Naive thymus-derived CD8-positive, alpha-beta T cell (primary cell): ENCODE measurements at regions of chrX and their contacts with region 1.

Region 1: DNA sequence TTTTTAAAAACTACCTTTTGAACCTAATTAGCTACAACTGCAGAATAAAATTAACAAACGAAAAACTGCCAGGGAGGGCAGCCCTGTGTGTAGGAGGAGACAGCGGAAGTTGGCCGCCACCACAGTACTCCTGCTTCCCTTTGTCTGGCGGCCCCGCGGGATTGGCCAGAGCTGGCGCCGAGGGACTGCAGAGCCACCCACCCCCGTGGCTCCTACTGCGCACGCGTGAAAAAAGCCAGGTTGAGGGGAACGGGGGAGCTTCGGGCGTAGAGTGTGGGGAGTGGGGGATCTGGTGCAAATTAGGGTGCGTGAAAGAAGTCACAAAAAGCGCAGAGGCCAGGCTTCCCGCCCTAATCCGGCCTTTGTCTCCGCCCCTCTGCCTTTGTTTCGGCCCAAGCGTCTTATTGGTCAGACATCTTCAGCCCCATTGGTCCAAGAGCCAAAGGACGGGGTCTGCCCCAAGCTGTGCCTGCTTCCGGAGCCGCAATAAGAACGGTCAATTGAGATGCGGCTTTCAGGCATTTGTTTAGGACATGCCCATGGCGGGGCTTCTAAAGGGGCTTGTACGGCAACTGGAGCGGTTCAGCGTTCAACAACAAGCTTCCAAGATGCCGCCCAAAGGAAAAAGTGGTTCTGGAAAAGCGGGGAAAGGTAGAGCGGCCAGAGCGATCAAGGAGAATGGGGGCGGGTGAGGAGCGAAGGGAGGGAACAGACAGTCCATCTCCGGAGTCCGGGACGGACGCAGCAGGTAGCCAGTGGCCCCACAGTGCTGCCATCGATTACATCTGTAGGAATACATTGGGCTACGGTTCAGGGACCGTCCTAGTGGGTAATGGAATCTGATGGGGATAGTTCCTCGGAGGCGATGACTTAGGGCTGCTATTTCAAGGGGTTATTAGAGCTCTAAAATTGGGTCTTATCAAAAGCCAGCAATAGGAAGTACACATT is at the start of gene PIN4:
- DNase-seq: peak; percentile 67 to 90 (median 80)
- ATAC-seq: peak; percentile 87 to 91
- H3K4me3 Mint-ChIP-seq: no peak within 1 kb of the TSS
- H3K27ac Mint-ChIP-seq: peak within 1 kb of the TSS in 1 of 10 donors; percentile 24
- H3K4me1 Mint-ChIP-seq: peaks cover 3 to 17% (median 12%) of the 10 kb centered on the region in 4 donors
- H3K27me3 Mint-ChIP-seq: no peaks in the 10 kb centered on the region
- polyA plus RNA-seq, gene PIN4: 26.7 to 32.5 (median 31.5) TPM

Region 2: DNA sequence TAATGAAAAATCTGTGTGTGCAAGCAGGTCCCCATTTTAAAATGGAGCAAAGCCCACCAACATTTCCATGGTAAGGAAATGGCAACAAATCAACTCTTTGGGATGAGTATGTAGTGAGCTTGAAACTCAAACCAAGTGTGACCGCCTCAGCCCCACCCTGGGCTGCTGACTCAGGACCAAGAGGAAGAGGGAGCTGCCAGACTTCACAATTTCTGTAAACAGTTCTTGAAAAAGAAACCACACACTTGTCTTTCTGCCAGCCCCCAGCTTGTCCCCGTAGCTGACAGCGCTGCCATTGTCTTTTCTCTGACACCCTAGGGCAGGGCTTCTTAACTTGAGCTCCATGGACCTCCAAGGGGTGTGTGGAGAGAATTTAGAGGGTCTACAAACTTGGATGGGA is 60.1 kb before region 1 on chrX:
- POLR2A ChIA-PET with region 1: no interaction called
- DNase-seq: peak in 5 of 10 donors; percentile 18 to 41 (median 31)
- ATAC-seq: peak; percentile 74 to 87
- H3K4me3 Mint-ChIP-seq: peak overlapping the region in 6 of 10 donors; percentile 34 to 57 (median 44)
- H3K27ac Mint-ChIP-seq: peak overlapping the region in 5 of 10 donors; percentile 66 to 84 (median 79)
- H3K4me1 Mint-ChIP-seq: peaks cover 5 to 70% (median 13%) of the 10 kb centered on the region in 4 donors
- H3K27me3 Mint-ChIP-seq: peaks cover 0 to 26% (median 4%) of the 10 kb centered on the region in 5 donors

Region 3: DNA sequence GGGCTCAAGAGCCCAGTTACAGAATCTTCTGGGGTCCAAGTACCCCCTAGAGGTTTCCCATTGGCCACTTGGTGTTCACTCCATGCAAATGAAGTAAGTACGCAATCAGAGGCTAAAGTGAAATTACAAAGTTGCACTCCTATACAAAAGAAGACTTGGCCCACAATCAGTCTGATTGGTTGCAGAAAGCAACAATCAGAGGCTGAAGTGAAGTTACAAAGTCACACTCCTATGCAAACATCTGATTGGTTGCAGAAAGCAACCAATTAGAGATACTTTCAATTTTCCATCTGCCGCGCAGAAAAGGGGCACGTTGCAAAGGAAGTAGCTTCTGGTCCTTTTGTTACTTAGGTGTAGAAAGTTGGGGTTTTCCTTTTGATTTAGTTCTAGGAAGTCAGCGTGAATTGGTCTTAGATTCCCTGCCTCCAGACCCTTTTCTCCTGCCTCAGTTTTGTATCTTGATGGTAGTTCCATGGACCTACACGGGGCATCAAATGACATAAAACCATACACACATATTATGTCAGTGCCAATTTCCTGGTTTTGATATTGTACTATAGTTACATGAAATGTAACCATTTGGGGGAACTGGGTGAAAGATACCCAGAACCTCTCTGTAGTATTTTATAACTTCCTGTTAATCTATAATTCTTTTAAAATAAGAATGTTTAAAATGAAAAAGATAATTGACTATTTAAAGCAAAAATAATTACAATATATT is 12.3 kb before region 1 on chrX:
- POLR2A ChIA-PET with region 1: interaction called, 14 read pairs
- DNase-seq: peak in 9 of 10 donors; percentile 4 to 67 (median 39)
- ATAC-seq: peak; percentile 93 to 94
- H3K4me3 Mint-ChIP-seq: peak overlapping the region; percentile 57 to 87 (median 82)
- H3K27ac Mint-ChIP-seq: peak overlapping the region; percentile 28 to 97 (median 96)
- H3K4me1 Mint-ChIP-seq: peaks cover 0 to 4% (median 0%) of the 10 kb centered on the region in 4 donors
- H3K27me3 Mint-ChIP-seq: no peaks in the 10 kb centered on the region

Region 4: DNA sequence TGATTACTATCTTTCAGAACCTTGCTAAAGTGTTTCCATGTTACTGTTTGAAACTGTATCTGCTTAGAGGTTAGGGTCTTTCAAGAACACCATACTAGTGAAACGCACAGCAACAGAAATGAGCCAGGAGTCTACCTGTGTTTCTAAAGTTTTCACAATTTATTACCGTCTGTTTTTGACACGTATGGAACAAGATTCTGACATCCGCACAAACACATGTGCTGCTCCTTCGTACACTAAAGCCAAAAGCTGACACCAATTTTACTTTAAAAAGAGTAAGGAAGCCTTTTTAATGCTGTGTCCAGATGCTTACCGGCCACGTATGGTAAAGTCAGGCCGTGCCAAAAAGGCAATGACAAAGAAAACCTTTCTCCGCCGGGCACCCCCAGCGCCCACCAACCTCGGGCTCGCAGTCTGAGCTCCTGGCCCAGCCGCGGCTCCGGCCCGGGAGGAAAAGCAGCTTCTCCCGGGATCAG is 95.1 kb after region 1 on chrX:
- POLR2A ChIA-PET with region 1: interaction called, 18 read pairs
- DNase-seq: no peak
- ATAC-seq: peak; percentile 4 to 22
- H3K4me3 Mint-ChIP-seq: peak overlapping the region; percentile 82 to 95 (median 89)
- H3K27ac Mint-ChIP-seq: peak overlapping the region; percentile 87 to 97 (median 95)
- H3K4me1 Mint-ChIP-seq: peaks cover 12 to 40% (median 33%) of the 10 kb centered on the region in 4 donors
- H3K27me3 Mint-ChIP-seq: peaks cover 0 to 6% (median 2%) of the 10 kb centered on the region in 5 donors